ENCODE measurements at regions of chr2 and their contacts with region 1.

Region 1: DNA sequence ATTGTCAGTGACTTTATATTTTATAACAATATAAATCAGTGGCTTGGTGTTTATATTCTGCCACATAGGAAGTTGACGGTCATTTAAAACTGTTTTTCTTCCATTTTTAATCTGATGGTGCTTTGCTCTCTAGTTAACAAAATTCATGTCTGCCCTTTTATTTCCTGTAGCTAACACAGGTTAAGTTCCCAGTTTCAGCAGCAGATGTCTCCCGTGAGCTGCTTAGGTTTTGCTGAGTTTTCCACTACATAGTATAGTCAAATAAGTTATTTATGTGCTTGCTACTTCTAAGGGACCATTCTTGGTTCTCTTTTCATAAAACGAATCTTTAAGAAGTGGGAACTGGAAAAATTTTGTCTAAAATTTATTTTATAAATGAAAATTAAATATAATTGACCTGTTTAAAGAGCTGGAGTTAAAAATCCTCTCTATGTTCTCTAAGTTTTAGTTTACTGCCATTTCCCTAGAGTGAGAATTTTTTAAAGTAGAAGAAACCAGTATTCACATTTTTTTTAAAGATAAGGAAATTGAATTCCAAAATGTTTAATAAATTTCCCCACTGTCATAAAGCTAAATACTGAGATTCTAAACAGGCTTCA is 20.6 kb downstream of the HTR2B start:
- DNase-seq: peak in 2 of 3 donors; percentile 45 to 71
- ATAC-seq: peak; percentile 84 to 86
- H3K4me3 ChIP-seq: no peak overlapping the region
- H3K27ac ChIP-seq: no peak overlapping the region
- H3K4me1 ChIP-seq: no peaks in the 10 kb centered on the region
- H3K27me3 ChIP-seq: no peaks in the 10 kb centered on the region

Region 2: DNA sequence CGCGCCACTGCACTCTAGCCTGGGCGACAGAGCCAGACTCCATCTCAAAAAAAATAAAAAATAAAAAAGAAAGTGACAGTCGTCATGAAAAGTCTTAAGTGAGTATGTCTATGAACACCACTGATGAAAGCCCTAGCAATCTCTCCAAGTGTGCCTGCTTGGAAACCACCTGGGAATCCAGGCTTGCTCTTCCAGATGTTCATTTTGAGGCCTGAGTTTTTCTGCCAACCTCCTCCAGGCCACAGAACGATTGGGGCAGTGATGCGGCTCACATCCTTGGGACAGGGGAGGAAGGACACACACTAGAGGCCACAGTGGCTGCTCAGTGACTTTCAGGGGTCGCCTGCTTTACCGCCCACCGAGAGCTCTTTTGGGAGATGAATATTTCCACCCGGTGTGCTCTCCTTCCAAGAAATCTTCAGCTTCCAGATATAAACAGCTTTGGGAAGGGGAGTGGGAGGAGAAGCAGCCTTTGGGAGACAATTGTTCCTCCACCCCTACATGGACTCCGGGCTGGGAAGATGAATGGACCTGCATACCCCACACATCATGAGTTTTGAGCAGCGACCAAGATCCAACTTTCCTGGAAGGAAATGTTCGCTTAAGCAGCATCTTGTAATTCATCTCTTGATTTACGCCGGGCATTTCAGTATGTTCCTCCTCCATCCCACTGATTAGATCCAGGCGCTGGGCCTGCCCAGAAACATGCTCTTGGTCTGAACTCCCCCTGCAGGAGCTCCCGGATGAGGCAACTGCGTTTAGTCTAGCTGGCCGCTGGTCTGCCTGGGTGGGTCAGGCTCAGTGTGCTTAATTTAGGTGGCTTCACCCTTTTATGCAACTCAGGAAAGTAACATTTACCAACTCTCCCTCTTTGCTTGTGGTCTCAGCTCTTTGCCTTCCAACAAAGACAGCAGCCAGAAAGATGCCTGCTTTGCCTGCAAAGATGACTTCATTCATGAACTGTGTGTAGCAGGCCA is 88.0 kb after region 1 on chr2:
- intact Hi-C with region 1: loop called (anchors 2 to 10 kb)
- DNase-seq: peak; percentile 90 to 95 (median 92)
- ATAC-seq: peak; percentile 63 to 69
- H3K4me3 ChIP-seq: no peak overlapping the region
- H3K27ac ChIP-seq: peak overlapping the region; percentile 18
- H3K4me1 ChIP-seq: peaks cover 2% of the 10 kb centered on the region
- H3K27me3 ChIP-seq: no peaks in the 10 kb centered on the region

Region 3: DNA sequence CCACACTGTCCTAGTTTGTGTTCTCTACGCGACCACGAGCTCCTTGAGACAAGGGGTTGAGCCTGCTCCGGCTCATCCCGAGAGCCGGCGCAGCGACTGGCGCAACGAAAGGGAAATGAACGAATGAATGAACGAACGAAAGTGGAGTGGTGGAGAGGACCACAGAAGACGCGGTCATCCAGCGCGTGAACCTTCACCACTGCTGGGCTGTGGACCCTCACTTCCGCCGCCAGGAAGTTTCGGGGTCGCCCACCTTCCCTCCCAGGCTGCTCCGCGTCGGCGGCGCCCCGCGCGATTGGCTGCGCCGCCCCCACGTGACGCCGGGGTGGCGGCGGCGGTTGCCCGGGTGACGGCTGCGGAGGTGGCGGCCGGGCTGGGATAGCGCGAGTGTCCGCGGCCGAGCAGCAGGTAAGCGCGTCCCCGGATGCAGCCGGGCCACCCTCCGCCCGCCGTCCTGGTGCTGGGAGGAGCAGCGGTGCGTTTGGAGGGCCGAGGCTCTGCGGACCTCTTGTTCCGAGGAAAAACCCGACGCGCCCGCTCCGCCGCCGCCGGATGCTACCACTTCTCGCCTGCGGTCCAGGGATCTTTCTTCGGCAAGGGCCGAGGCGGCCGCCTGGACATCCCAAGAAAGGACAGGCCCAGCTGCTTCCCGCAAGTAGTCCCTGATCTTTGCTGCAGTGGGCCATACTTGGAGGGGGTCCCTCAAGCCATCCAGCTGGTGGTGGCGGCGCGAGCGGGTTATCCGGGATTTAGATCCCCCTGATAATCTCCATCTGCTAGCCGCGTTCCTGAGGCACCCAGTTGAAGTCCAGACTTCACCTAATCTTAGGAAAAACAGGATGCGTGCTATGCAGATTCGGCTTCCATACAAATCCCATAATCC is 94.3 kb after region 1 on chr2 and contains the start of gene ARMC9:
- intact Hi-C with region 1: loop called (anchors 2 to 10 kb)
- DNase-seq: peak; percentile 76 to 90 (median 89)
- ATAC-seq: peak; percentile 97 to 98
- H3K4me3 ChIP-seq: peak within 1 kb of the TSS; percentile 82
- H3K27ac ChIP-seq: no peak within 1 kb of the TSS
- H3K4me1 ChIP-seq: peaks cover 2% of the 10 kb centered on the region
- H3K27me3 ChIP-seq: no peaks in the 10 kb centered on the region
- total RNA-seq, gene ARMC9: 3.5 to 6.8 (median 3.8) TPM

Region 4: DNA sequence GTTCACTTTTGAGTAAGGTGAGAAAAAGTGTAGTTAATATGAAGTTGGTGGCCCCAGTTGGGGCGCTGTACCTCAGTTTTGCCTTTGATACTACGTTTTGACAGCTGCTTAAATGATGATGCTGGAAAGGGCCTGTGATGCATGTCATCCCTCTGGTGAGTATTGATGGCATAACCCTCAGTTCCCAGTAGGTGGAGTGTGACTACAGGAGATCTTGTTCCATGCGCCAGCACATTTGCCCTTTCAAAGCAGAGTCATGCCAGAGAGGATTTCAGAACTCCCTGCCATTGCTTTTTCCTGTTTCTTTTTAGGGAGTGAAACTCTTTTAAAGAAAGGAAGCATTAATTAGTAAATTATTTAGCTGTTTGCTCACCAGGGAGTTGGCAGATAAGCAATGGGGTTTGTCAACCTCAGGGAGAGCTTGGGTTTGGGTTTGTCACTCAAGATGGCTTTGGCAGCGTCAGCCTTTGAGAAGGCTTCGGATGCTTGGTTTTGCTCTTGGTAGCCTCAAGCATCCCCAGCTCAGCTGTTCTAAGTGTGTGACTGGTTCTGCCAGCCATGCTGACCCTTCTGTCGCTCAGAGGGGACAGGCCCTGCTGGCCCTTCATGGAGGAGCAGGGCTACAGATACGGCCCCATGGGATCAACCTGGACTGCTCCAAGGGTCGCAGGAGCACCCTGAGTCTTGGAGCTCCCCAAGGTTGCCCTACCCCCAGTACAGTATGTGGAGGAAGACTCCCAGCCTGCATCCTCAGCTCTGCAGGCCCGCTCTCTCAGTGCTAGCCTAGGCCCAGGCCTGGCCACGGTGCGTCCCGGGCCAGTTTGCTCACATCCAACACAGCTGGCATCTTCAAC is 123.3 kb after region 1 on chr2:
- intact Hi-C with region 1: no loop called
- DNase-seq: peak in 2 of 3 donors; percentile 47 to 70
- ATAC-seq: peak; percentile 95 to 96
- H3K4me3 ChIP-seq: no peak overlapping the region
- H3K27ac ChIP-seq: no peak overlapping the region
- H3K4me1 ChIP-seq: no peaks in the 10 kb centered on the region
- H3K27me3 ChIP-seq: no peaks in the 10 kb centered on the region

Region 5: GRCh38 chr2:231411831-231412617 is 307.8 kb after region 1 on chr2:
- intact Hi-C with region 1: loop called in 1 of 4 experiments (anchors 10 kb)
- DNase-seq: peak; percentile 88 to 94 (median 94)
- ATAC-seq: peak; percentile 99
- H3K4me3 ChIP-seq: peak overlapping the region; percentile 51
- H3K27ac ChIP-seq: no peak overlapping the region
- H3K4me1 ChIP-seq: no peaks in the 10 kb centered on the region
- H3K27me3 ChIP-seq: no peaks in the 10 kb centered on the region

Region 6: DNA sequence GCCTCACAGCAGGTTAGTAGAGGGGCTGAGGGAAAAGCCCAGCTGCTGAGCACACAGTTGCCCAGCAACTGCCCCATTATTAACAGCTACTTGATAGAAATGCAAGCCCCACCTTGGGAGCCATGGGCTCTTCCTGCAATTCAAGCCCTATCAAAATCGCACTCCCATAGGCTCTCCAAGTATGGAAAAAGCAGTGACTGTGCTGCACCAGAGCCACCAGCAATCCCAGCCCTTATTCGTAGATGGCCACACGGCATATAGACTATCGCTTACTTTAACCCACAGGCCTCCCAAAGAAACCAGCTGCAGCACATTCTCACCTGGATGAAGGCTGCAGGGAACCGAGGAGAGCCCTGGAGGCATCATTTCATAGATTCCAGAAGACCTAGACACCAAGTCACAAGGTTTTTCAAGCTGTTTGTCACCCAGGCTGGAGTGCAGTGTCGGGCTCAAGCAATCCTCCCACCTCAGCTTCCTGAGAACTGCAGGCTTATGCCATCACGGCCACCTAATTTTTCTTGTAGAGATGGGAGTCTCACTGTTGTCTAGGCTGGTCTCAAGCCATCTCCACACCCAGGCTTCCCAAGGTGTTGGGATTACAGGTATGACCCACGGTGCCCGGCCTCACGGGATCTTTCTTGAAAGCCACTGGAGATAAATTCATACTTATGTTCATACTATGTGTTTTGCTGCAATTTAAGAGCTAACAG is 348.7 kb after region 1 on chr2:
- intact Hi-C with region 1: loop called in 2 of 4 experiments (anchors 10 kb)
- DNase-seq: no peak
- ATAC-seq: peak; percentile 22 to 31
- H3K4me3 ChIP-seq: no peak overlapping the region
- H3K27ac ChIP-seq: no peak overlapping the region
- H3K4me1 ChIP-seq: no peaks in the 10 kb centered on the region
- H3K27me3 ChIP-seq: no peaks in the 10 kb centered on the region